RWPE1 (cell line): ENCODE measurements at regions of chr11 and their contacts with region 1.

Region 1: DNA sequence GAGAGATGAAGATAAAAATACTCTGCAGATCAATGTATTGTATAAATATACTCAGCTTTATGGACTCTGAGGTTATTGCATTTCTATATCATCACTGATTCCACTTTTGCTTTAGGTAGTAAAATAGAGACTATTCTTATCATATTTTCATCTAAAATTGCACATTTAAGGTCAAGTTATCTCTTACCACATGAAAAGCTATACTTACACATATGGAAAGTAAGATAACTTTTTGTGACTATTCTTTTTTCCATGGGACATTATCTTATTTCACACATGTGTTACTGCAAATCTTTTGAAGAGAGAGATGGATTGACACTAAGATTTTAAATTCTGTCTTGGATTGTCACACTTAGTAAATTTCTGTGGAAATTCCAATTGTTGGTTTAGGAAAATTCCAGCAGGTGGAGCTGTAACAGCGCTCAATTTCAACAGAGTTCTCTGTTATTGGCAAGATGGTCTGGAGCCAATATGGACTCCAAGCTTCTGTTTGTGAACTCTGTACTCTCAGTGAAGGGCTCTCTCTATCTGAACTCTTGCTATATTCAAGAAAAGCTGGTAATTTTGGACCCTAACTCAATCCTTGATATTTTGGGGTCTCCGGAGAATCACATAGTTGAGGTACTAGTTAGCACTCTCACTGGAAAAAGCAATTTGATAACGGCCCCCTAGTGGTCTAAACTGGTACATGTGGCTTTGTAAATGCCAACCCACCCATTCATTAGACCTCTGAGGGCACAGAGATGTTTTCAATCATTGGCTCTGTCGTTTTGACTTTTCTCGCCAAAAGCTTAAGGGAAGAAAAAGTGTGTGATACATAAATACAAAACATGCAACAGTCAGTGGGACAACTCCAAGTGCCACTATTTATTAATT is 429.7 kb downstream of the ETS1 start:
- DNase-seq: peak; percentile 49
- H3K27ac ChIP-seq: no peak overlapping the region
- CTCF ChIP-seq: peak; percentile 85

Region 2: DNA sequence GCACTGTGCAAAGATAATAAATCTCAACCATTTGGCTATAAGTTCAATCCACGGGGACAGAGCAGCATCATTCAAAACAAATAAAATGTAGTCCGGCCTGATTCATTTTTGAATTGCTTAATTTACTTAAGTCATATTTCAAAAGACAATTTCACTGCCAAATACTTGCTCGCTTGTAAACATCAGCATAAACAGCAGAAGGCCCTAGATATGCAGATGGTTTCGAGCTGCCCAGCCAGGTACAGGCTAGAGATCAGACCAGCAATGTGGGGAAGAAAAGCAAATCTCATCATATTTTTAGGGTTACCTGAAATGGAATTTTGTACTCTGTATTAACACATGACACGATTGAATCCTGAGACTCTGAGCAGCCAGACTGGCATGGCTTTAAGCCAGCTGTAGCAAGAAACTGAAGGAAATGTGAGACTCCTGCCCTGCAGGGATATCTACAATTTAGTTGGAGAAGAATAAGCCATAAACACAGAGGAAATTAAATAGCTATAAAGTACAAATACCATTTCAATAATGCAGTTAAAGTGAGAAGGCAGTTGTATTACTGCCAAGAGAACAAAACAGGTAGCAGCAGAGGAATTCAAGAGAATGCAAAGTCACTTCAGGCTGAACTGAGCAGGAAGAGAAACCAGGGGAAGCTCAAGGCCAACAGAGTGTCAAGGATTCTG is 10.6 kb before region 1 on chr11:
- CTCF ChIA-PET with region 1: interaction called, 14 read pairs
- POLR2A ChIA-PET with region 1: no interaction called
- DNase-seq: no peak
- H3K27ac ChIP-seq: peak overlapping the region; percentile 93
- CTCF ChIP-seq: no peak

Region 3: DNA sequence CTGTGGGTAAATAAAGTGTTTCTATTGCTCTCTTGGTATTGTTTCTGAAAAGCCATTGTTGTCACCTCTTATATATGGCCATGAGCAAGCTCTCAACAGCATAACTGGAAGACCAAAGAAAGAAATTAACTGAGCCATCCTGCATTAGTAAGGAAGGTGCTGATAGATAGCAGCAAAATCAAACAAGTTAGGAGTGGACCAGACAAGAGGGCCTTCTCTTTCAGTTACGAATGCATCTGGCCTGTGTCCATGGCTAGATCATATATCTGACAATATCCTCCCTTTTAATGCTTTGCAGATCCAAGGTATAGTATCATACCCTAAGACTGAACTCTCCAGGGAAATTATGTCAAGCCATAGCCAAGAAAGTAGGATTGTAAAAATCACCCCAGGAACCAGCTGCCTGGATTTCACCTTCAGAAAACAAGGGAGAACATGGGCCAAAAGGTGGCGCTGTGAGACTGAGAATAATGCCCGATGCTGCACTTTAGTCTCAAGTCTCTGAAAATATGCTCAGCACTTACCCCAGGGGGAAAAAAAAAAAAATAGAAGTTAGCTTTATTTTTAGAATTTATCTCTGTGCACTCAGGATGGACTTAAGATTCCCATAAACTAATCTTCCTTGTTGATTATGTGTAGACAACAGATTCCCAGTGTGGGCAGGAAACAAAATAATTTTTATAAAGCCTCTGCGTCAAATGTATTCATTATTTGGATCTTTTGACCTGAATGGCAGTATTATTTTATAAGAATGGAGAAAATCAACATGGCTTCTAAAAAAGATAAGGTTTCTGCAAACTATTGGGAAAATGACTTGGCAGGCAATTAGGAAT is 14.6 kb after region 1 on chr11:
- CTCF ChIA-PET with region 1: interaction called, 10 read pairs
- POLR2A ChIA-PET with region 1: no interaction called
- DNase-seq: peak; percentile 85
- H3K27ac ChIP-seq: peak overlapping the region; percentile 56; the same call in 1 of the 2 replicates
- CTCF ChIP-seq: peak; percentile 76

Region 4: DNA sequence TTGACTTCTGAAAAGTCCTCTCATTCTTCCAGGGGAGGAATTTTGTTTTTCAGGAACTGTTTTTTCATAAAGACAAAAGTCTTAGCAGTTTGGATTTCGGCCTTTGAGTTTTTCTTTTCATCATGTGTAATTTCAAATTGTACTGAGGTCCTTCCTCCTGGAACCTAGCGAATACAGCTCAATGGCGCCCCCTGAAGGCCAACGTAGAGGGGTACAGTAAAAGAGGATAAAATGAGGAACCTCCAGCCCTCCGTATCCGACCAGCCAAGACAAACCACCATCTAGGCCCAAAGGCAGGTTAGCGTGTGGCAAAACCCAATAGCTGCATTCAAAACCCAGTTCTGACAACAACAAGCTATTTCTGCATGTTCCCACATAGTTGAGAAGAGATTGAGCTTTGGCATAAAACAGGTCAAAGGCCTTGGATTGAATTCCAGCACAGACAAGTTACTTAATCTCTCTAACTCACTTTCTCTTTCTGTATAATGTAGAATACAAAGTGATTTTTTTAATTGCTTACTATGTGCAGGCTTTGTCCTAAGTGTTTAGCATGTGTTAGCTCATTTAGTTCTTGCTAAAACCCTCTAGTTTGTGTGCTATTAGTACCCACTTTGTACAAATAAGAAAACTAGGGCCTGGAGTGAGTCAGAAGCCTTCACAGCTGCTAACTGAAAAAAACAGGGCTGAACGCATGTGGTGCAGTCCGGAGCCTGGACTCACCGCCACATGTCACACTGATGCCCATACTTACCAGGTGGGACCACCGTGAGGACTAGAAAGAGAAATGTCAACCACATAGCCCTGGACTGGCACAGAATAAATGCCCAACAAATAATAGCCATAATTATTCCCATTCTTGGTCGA is 472.9 kb after region 1 on chr11:
- CTCF ChIA-PET with region 1: interaction called, 12 read pairs
- POLR2A ChIA-PET with region 1: no interaction called
- DNase-seq: peak; percentile 81
- H3K27ac ChIP-seq: no peak overlapping the region
- CTCF ChIP-seq: peak; percentile 84